Activated B cell treated with CpG ODN at 0.5 μM for 24 hours (primary cell): ENCODE measurements at regions of chr9 and their contacts with region 1.

Region 1: DNA sequence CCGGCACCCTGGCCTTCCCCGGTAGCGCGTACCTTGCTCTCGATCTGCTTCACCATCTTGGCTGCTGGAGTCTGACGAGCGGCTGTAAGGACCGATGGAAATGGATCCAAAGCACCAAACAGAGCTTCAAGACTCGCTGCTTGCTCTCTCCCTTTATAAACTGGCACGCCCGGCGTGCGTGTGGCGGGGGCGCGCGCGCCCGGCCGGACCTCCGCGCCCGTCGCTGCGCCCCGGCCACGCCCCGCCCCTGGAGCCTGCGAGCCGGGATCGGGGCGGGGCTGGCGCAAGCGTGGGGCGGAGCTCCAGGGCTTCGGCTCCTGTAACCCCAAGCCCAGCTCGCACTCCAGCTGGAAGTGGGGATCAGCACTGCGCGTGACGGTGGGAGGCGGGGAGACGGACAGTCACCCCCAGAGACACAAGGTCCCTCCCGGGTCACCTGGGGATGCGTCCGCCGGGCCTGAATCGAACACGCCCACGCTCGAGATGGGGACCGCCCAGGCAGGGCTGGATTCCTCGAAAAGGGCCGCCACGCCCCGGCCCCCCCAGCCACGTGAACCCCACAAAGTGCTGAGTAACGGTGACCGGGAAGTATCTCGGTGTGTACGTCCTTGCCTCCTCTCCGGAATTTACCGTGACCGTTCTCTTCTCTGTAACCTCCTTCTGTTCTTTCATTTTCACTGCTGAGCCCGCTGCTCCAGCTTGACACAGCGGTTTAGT is at the start of gene TXN:
- DNase-seq: peak; percentile 84
- ATAC-seq: peak; percentile 80
- H3K4me3 Mint-ChIP-seq: peak within 1 kb of the TSS; percentile 92
- H3K27ac Mint-ChIP-seq: peak within 1 kb of the TSS; percentile 92
- H3K4me1 Mint-ChIP-seq: peaks cover 63% of the 10 kb centered on the region
- H3K27me3 Mint-ChIP-seq: no peaks in the 10 kb centered on the region
- CTCF ChIP-seq: no peak
- total RNA-seq, gene TXN: 205 and 237 TPM in 2 replicates

Region 2: GRCh38 chr9:109012876-109013678 is 1243.5 kb before region 1 on chr9 and contains the start of gene CTNNAL1:
- CTCF ChIA-PET with region 1: no interaction called
- POLR2A ChIA-PET with region 1: no interaction called
- intact Hi-C with region 1: loop called (anchors 10 kb)
- DNase-seq: peak; percentile 88
- ATAC-seq: peak; percentile 96
- H3K4me3 Mint-ChIP-seq: peak within 1 kb of the TSS; percentile 92
- H3K27ac Mint-ChIP-seq: peak within 1 kb of the TSS; percentile 72
- H3K4me1 Mint-ChIP-seq: peaks cover 38% of the 10 kb centered on the region
- H3K27me3 Mint-ChIP-seq: peaks cover 9% of the 10 kb centered on the region
- CTCF ChIP-seq: no peak
- total RNA-seq, gene CTNNAL1: 1.9 and 2.4 TPM in 2 replicates

Region 3: GRCh38 chr9:109411798-109412352 is 844.7 kb before region 1 on chr9:
- CTCF ChIA-PET with region 1: no interaction called
- POLR2A ChIA-PET with region 1: no interaction called
- intact Hi-C with region 1: loop called (anchors 5 kb)
- DNase-seq: no peak
- ATAC-seq: peak; percentile 53
- H3K4me3 Mint-ChIP-seq: peak overlapping the region; percentile 62
- H3K27ac Mint-ChIP-seq: peak overlapping the region; percentile 89
- H3K4me1 Mint-ChIP-seq: peaks cover 60% of the 10 kb centered on the region
- H3K27me3 Mint-ChIP-seq: peaks cover 3% of the 10 kb centered on the region
- CTCF ChIP-seq: no peak

Region 4: GRCh38 chr9:110125207-110125751 is 131.3 kb before region 1 on chr9:
- CTCF ChIA-PET with region 1: no interaction called
- POLR2A ChIA-PET with region 1: no interaction called
- intact Hi-C with region 1: loop called (anchors 5 kb)
- DNase-seq: no peak
- ATAC-seq: no peak
- H3K4me3 Mint-ChIP-seq: peak overlapping the region; percentile 71
- H3K27ac Mint-ChIP-seq: peak overlapping the region; percentile 85
- H3K4me1 Mint-ChIP-seq: peaks cover 97% of the 10 kb centered on the region
- H3K27me3 Mint-ChIP-seq: no peaks in the 10 kb centered on the region
- CTCF ChIP-seq: no peak

Region 5: DNA sequence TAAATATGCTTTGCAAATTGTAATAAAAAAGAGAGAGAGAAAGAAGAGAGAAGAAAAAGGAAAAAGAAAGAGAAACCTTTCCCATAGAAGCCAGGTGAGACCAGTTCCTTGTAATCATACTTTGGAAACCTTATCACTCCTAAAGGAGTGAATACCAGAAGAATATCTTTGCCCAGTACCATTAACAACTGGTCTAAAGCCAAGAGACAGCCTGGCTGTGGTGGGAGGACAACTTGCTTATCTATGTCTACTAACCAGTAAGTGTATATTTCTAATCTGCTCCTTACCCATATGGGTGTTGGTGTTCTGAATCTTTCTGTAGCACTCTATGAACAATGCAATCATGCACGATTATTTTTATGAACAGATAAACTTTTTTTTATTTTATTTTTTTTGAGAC is 10.3 kb after region 1 on chr9:
- CTCF ChIA-PET with region 1: no interaction called
- POLR2A ChIA-PET with region 1: no interaction called
- intact Hi-C with region 1: no loop called
- DNase-seq: no peak
- ATAC-seq: no peak
- H3K4me3 Mint-ChIP-seq: no peak overlapping the region
- H3K27ac Mint-ChIP-seq: no peak overlapping the region
- H3K4me1 Mint-ChIP-seq: no peaks in the 10 kb centered on the region
- H3K27me3 Mint-ChIP-seq: peaks cover 8% of the 10 kb centered on the region
- CTCF ChIP-seq: no peak

Region 6: DNA sequence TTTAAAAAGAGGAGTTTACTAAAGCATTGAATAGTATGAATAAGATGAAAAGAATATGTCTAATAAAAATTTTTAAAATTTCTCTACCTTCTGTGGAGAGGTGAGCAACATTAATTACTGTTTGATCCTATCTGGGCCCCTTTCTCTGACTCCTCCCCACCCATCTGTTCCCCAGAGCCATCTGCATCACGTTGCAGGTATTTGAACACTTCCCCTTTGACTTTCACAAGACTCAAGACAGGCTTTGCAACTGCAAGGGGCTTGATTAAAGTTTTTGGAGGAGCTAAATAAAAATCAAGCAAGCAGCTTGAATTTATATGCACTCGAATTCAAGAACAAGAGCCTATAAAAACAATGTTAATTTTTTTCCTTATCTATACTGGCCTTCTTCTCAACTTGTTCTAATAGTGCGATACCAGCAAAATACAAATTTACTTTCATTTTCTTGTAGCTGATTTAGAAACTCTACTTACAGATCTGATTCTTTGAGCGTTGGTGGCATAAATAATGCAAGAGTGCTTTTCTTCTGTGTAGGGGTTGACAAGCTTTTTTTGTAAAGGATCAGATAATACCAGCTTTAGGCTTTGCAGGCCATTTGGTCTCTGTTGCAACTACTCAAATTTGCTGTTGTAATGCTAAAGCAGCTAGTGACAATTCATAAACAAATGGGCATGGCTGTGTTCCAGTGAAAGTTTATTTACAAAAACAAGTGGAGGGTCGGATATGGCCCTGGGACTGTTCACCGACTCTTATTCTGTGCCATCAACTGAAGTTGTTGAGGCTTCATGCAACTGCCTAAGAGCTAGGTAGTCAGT is 59.9 kb after region 1 on chr9:
- CTCF ChIA-PET with region 1: no interaction called
- POLR2A ChIA-PET with region 1: interaction called, 9 read pairs
- intact Hi-C with region 1: loop called (anchors 2 kb)
- DNase-seq: no peak
- ATAC-seq: peak; percentile 87
- H3K4me3 Mint-ChIP-seq: peak overlapping the region; percentile 76
- H3K27ac Mint-ChIP-seq: peak overlapping the region; percentile 30
- H3K4me1 Mint-ChIP-seq: peaks cover 9% of the 10 kb centered on the region
- H3K27me3 Mint-ChIP-seq: no peaks in the 10 kb centered on the region
- CTCF ChIP-seq: no peak